Heart right ventricle (tissue), 16 donors: ENCODE measurements at regions of chr9 and their contacts with region 1.

Region 1: DNA sequence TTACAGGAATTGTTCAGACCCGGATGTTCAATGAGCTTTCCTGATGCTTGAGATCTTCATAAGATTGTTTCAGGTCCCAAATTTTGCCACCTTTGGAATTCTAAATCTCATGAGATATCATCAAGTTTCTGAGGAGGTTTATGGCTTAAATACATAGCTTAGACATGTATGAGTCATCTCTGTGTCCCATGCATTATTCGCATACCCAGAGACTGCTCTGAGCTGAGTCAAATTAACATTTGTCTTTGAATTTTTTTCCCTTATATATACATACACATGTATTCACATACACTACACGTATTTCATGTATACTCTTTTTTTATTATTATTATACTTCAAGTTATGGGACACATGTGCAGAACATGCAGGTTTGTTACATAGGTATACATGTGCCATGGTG is 744.6 kb downstream of the BRINP1 start:
- DNase-seq: no peak
- ATAC-seq: no peak
- H3K4me3 ChIP-seq: no peak overlapping the region
- H3K27ac ChIP-seq: no peak overlapping the region
- H3K4me1 ChIP-seq: no peaks in the 10 kb centered on the region
- H3K27me3 ChIP-seq: no peaks in the 10 kb centered on the region
- CTCF ChIP-seq: no peak

Region 2: GRCh38 chr9:118643118-118643517 is 18.5 kb after region 1 on chr9:
- intact Hi-C with region 1: no loop called
- DNase-seq: no peak
- ATAC-seq: no peak
- H3K4me3 ChIP-seq: no peak overlapping the region
- H3K27ac ChIP-seq: no peak overlapping the region
- H3K4me1 ChIP-seq: no peaks in the 10 kb centered on the region
- H3K27me3 ChIP-seq: no peaks in the 10 kb centered on the region
- CTCF ChIP-seq: no peak

Region 3: DNA sequence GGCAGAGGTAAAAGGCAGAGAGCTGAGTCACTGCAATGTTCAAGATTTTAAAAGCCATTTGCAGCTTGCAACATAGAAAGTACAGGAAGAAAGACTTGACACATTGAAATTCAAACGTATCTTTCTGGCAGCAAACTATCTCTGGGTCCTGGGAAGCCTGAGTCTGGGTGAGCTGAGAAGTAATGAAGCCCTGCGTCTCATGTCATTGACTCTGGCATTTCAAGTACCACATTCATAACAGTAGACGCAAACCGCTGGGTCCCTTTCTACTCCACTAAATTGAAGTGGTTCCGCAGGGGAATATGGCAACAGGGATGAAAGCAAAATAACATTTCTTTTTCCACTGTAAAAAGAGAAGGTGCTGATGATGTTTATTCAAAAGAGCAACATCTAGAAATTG is 50.3 kb after region 1 on chr9:
- intact Hi-C with region 1: loop called in 1 of 10 experiments (anchors 5 kb)
- DNase-seq: no peak
- ATAC-seq: no peak
- H3K4me3 ChIP-seq: no peak overlapping the region
- H3K27ac ChIP-seq: no peak overlapping the region
- H3K4me1 ChIP-seq: no peaks in the 10 kb centered on the region
- H3K27me3 ChIP-seq: peaks cover 0 to 5% (median 0%) of the 10 kb centered on the region in 7 donors
- CTCF ChIP-seq: no peak